ENCODE measurements at regions of chr3 and their contacts with region 1.

Region 1: GRCh38 chr3:87088993-87089841 is 98.3 kb upstream of the VGLL3 start:
- DNase-seq: peak; percentile 56
- H3K4me3 ChIP-seq: peak overlapping the region; percentile 37 to 62 (median 52)
- H3K27ac ChIP-seq: no peak overlapping the region
- H3K4me1 ChIP-seq: peaks cover 11% of the 10 kb centered on the region
- H3K27me3 ChIP-seq: no peaks in the 10 kb centered on the region
- CTCF ChIP-seq: no peak

Region 2: GRCh38 chr3:87135412-87135811 is 46.2 kb after region 1 on chr3:
- CTCF ChIA-PET with region 1: no interaction called
- dilution Hi-C with region 1: no loop called
- in situ Hi-C with region 1: no loop called
- intact Hi-C with region 1: loop called (anchors 1 kb)
- DNase-seq: no peak
- H3K4me3 ChIP-seq: no peak overlapping the region
- H3K27ac ChIP-seq: no peak overlapping the region
- H3K4me1 ChIP-seq: no peaks in the 10 kb centered on the region
- H3K27me3 ChIP-seq: no peaks in the 10 kb centered on the region
- CTCF ChIP-seq: no peak

Measured in mammary epithelial cell (primary cell).